Heart right ventricle (tissue), 16 donors: ENCODE measurements at regions of chr3 and their contacts with region 1.

Region 1: DNA sequence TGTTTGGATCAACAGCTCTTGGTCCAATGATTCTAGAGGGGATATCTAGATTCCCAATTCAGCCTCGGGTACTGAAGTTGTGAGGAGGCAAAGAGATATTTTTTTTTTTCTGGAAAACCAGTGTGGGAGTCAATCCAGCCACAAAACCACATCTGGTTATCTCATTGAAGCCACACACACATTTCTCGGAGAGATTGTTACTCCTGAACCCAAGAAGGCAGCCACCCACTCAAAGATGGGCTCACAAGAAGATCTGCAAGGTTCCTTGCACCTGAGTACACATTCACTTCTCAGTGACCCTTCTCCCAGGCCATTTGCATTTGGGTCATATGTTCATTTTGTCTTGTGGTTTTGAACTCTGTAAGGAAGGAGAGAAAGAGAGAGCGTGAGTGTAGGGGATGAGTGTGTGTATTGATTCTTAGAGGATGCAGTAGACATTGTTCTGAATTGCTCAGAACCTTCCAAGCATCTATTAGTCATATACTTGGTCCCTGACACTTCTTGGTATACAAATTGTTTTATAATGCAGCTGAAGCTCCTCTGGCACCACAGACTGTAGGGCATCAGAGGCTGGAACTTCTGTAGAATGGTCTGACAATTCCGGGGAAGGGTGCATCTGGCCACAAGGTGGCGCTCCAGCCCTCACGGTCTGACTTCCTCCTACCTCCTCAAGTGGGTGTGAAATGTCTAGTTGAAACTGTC is 39.3 kb upstream of the TRA2B start:
- DNase-seq: peak; percentile 74 to 82
- ATAC-seq: peak in 6 of 8 donors; percentile 64 to 82 (median 71)
- H3K4me3 ChIP-seq: no peak overlapping the region
- H3K27ac ChIP-seq: no peak overlapping the region
- H3K4me1 ChIP-seq: peaks cover 0 to under 1% (median 0%) of the 10 kb centered on the region in 9 donors
- H3K27me3 ChIP-seq: no peaks in the 10 kb centered on the region
- CTCF ChIP-seq: peak; percentile 63 to 94 (median 88)

Region 2: GRCh38 chr3:186241910-186242821 is 265.0 kb after region 1 on chr3:
- intact Hi-C with region 1: loop called in 7 of 10 experiments (anchors 2 to 10 kb)
- DNase-seq: peak; percentile 65 to 71
- ATAC-seq: peak; percentile 94 to 98 (median 95)
- H3K4me3 ChIP-seq: peak overlapping the region in 7 of 10 donors; percentile 4 to 51 (median 43)
- H3K27ac ChIP-seq: peak overlapping the region; percentile 55 to 82 (median 72)
- H3K4me1 ChIP-seq: peaks cover 6 to 41% (median 27%) of the 10 kb centered on the region in 9 donors
- H3K27me3 ChIP-seq: no peaks in the 10 kb centered on the region
- CTCF ChIP-seq: peak in 8 of 9 donors; percentile 11 to 64 (median 59)

Region 3: GRCh38 chr3:186425788-186426730 is 448.9 kb after region 1 on chr3:
- intact Hi-C with region 1: no loop called
- DNase-seq: no peak
- ATAC-seq: peak in 7 of 8 donors; percentile 11 to 83 (median 50)
- H3K4me3 ChIP-seq: no peak overlapping the region
- H3K27ac ChIP-seq: peak overlapping the region in 7 of 10 donors; percentile 8 to 76 (median 63)
- H3K4me1 ChIP-seq: peaks cover 3 to 36% (median 28%) of the 10 kb centered on the region in 9 donors
- H3K27me3 ChIP-seq: peaks cover 0 to 3% (median 0%) of the 10 kb centered on the region in 7 donors
- CTCF ChIP-seq: peak in 7 of 9 donors; percentile 10 to 36 (median 20)

Region 4: GRCh38 chr3:186540221-186540834 is 563.2 kb after region 1 on chr3:
- intact Hi-C with region 1: loop called in 6 of 10 experiments (anchors 2 to 5 kb)
- DNase-seq: peak in 1 of 2 donors; percentile 67
- ATAC-seq: peak in 7 of 8 donors; percentile 67 to 87 (median 82)
- H3K4me3 ChIP-seq: peak overlapping the region in 2 of 10 donors; percentile 3 to 27
- H3K27ac ChIP-seq: peak overlapping the region in 1 of 10 donors; percentile 21
- H3K4me1 ChIP-seq: peaks cover 2 to 25% (median 9%) of the 10 kb centered on the region in 9 donors
- H3K27me3 ChIP-seq: no peaks in the 10 kb centered on the region
- CTCF ChIP-seq: peak; percentile 51 to 83 (median 71)